ENCODE measurements at regions of chr21 and their contacts with region 1.

Region 1: DNA sequence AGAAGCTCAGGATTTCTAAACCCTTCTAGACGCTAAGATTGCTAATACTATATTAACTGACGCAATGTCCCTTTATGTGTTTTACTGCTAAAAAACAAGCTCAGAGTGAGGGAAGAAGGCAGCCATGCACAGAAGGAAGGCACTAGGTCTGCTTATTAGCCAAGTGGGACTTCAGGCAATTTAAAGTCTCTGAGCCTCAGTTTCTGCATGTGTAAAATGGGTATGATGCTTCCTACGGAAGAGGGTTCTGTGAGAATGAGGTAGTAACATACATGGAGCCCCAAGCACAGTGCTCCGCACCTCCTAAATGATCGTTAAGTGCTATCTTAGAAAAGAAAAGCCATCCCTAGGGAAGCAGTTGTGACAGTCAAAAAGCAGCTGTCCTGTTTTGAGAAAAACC is 16.9 kb downstream of the MIS18A start:
- DNase-seq: no peak
- H3K4me3 ChIP-seq: no peak overlapping the region
- H3K27ac ChIP-seq: no peak overlapping the region
- H3K4me1 ChIP-seq: peaks cover 13% of the 10 kb centered on the region
- H3K27me3 ChIP-seq: no peaks in the 10 kb centered on the region

Region 2: GRCh38 chr21:31772674-31773555 is 489.0 kb before region 1 on chr21:
- in situ Hi-C with region 1: loop called (anchors 10 kb)
- DNase-seq: no peak
- H3K4me3 ChIP-seq: no peak overlapping the region
- H3K27ac ChIP-seq: no peak overlapping the region
- H3K4me1 ChIP-seq: no peaks in the 10 kb centered on the region
- H3K27me3 ChIP-seq: no peaks in the 10 kb centered on the region

Measured in GM23248 (cell line).